ENCODE measurements at regions of chr15 and their contacts with region 1.

Region 1: GRCh38 chr15:35871282-35871681 is 325.3 kb upstream of the DPH6 start:
- DNase-seq: no peak
- ATAC-seq: no peak
- H3K4me3 ChIP-seq: no peak overlapping the region
- H3K27ac ChIP-seq: no peak overlapping the region
- H3K4me1 ChIP-seq: no peaks in the 10 kb centered on the region
- H3K27me3 ChIP-seq: no peaks in the 10 kb centered on the region
- CTCF ChIP-seq: no peak

Region 2: DNA sequence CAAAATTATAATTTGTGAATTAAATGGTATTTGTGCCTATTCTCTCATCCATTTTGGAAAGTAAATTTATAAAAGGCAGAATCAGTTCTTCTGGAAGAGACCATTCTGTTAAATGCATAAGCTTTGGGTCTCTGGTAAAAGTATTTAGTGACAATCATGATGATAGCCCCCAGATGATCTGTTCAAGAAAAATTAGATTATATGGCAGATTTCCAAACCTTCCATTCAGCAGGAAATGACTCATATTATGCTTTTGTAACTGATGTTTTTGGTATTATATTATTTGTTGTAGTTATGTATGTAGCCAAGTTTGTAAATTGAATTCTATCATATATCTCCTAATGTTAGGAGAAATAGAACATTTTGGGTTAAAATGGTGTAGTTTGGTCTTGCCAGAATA is 15.5 kb after region 1 on chr15:
- CTCF ChIA-PET with region 1: no interaction called
- POLR2A ChIA-PET with region 1: no interaction called
- in situ Hi-C with region 1: no loop called
- intact Hi-C with region 1: no loop called
- DNase-seq: no peak
- ATAC-seq: no peak
- H3K4me3 ChIP-seq: no peak overlapping the region
- H3K27ac ChIP-seq: no peak overlapping the region
- H3K4me1 ChIP-seq: no peaks in the 10 kb centered on the region
- H3K27me3 ChIP-seq: no peaks in the 10 kb centered on the region
- CTCF ChIP-seq: no peak

Region 3: DNA sequence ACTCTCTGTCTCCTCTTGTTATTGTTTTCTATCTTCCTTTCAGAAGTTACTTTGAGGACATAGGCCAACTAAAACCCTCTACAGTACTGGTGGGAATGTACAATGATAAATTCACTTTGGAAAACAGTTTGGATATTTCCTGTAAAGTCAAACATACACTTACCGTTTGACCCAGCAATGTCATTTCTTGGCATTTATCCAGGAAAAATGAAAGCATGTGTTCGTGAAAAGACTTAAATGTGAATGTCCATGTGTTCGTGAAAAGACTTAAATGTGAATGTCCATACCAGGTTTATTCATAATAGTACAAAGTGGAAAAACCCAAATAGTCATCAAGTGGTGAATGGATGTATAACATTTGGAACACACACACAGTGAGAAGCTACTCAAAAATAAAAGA is 36.2 kb after region 1 on chr15:
- CTCF ChIA-PET with region 1: no interaction called
- POLR2A ChIA-PET with region 1: no interaction called
- in situ Hi-C with region 1: no loop called
- intact Hi-C with region 1: no loop called
- DNase-seq: no peak
- ATAC-seq: no peak
- H3K4me3 ChIP-seq: no peak overlapping the region
- H3K27ac ChIP-seq: no peak overlapping the region
- H3K4me1 ChIP-seq: no peaks in the 10 kb centered on the region
- H3K27me3 ChIP-seq: no peaks in the 10 kb centered on the region
- CTCF ChIP-seq: no peak

Region 4: GRCh38 chr15:36517758-36518157 is 646.5 kb after region 1 on chr15:
- CTCF ChIA-PET with region 1: interaction called, 10 read pairs
- POLR2A ChIA-PET with region 1: no interaction called
- in situ Hi-C with region 1: no loop called
- intact Hi-C with region 1: no loop called
- DNase-seq: no peak
- ATAC-seq: no peak
- H3K4me3 ChIP-seq: no peak overlapping the region
- H3K27ac ChIP-seq: no peak overlapping the region
- H3K4me1 ChIP-seq: no peaks in the 10 kb centered on the region
- H3K27me3 ChIP-seq: no peaks in the 10 kb centered on the region
- CTCF ChIP-seq: no peak

Measured in Panc1 (cell line).